Heart right ventricle (tissue), 16 donors: ENCODE measurements at regions of chr1 and their contacts with region 1.

Region 1: GRCh38 chr1:14259191-14259757 is 339.2 kb upstream of the KAZN start:
- DNase-seq: peak; percentile 69 to 77
- ATAC-seq: peak; percentile 92 to 96 (median 94)
- H3K4me3 ChIP-seq: no peak overlapping the region
- H3K27ac ChIP-seq: peak overlapping the region in 4 of 10 donors; percentile 6 to 36 (median 29)
- H3K4me1 ChIP-seq: peaks cover 0 to 4% (median 0%) of the 10 kb centered on the region in 9 donors
- H3K27me3 ChIP-seq: peaks cover 0 to 27% (median 8%) of the 10 kb centered on the region in 7 donors
- CTCF ChIP-seq: no peak

Region 2: GRCh38 chr1:13945856-13946255 is 313.4 kb before region 1 on chr1:
- intact Hi-C with region 1: no loop called
- DNase-seq: no peak
- ATAC-seq: no peak
- H3K4me3 ChIP-seq: no peak overlapping the region
- H3K27ac ChIP-seq: peak overlapping the region in 1 of 10 donors; percentile 2
- H3K4me1 ChIP-seq: no peaks in the 10 kb centered on the region
- H3K27me3 ChIP-seq: peaks cover 0 to 13% (median 0%) of the 10 kb centered on the region in 7 donors
- CTCF ChIP-seq: no peak

Region 3: GRCh38 chr1:14055442-14056223 is 203.6 kb before region 1 on chr1:
- intact Hi-C with region 1: no loop called
- DNase-seq: no peak
- ATAC-seq: no peak
- H3K4me3 ChIP-seq: no peak overlapping the region
- H3K27ac ChIP-seq: no peak overlapping the region
- H3K4me1 ChIP-seq: no peaks in the 10 kb centered on the region
- H3K27me3 ChIP-seq: peaks cover 0 to 18% (median under 1%) of the 10 kb centered on the region in 7 donors
- CTCF ChIP-seq: no peak

Region 4: GRCh38 chr1:14149431-14149830 is 109.8 kb before region 1 on chr1:
- intact Hi-C with region 1: no loop called
- DNase-seq: no peak
- ATAC-seq: no peak
- H3K4me3 ChIP-seq: no peak overlapping the region
- H3K27ac ChIP-seq: no peak overlapping the region
- H3K4me1 ChIP-seq: no peaks in the 10 kb centered on the region
- H3K27me3 ChIP-seq: no peaks in the 10 kb centered on the region
- CTCF ChIP-seq: no peak

Region 5: GRCh38 chr1:14304381-14304865 is 45.1 kb after region 1 on chr1:
- intact Hi-C with region 1: loop called in 1 of 10 experiments (anchors 2 kb)
- DNase-seq: no peak
- ATAC-seq: peak in 7 of 8 donors; percentile 38 to 91 (median 87)
- H3K4me3 ChIP-seq: no peak overlapping the region
- H3K27ac ChIP-seq: peak overlapping the region in 5 of 10 donors; percentile 17 to 55 (median 49)
- H3K4me1 ChIP-seq: peaks cover 0 to 6% (median 0%) of the 10 kb centered on the region in 9 donors
- H3K27me3 ChIP-seq: peaks cover 0 to 6% (median 0%) of the 10 kb centered on the region in 7 donors
- CTCF ChIP-seq: no peak